Activated B cell treated with CpG ODN at 0.5 μM for 24 hours (primary cell): ENCODE measurements at regions of chr17 and their contacts with region 1.

Region 1: DNA sequence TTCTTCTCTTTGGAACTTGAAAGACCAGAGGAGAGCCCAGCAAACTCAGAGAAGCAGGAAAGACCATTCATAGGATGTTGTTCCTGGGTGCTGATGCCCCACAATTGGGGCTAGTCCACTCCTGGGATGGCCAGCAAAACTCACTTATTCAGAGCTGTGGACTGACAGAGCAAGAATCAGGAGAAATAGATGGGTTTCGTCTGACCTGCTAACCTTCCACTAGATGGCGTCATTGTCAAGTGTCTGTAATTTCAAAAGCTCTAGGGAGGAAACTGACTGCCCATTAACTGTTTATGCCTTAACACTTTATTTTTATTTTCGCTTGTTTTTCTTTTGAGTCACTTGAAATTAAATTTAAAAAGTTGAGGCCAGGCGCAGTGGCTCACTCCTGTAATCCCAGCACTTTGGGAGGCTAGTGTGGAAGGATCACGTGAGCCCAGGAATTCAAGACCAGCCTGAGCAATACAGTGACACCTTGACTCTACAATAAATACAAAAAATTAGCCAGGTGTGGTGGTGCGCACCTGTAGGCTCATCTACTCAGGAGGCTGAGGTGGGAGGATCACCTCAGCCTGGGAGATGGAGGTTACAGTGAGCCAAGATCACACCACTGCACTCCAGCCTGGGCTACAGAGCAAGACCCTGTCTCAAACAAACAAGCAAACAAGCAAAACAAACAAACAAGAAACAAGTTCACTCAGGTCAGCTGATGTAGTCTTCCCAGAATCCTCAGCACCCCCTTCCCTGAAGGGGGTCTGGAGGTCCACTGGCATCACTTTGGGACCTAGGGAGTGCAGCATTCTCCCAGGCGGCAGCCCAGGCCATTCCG is 28.6 kb upstream of the MILR1 start:
- DNase-seq: no peak
- ATAC-seq: peak; percentile 78
- H3K4me3 Mint-ChIP-seq: no peak overlapping the region
- H3K27ac Mint-ChIP-seq: no peak overlapping the region
- H3K4me1 Mint-ChIP-seq: peaks cover 4% of the 10 kb centered on the region
- H3K27me3 Mint-ChIP-seq: no peaks in the 10 kb centered on the region
- CTCF ChIP-seq: peak; percentile 30

Region 2: DNA sequence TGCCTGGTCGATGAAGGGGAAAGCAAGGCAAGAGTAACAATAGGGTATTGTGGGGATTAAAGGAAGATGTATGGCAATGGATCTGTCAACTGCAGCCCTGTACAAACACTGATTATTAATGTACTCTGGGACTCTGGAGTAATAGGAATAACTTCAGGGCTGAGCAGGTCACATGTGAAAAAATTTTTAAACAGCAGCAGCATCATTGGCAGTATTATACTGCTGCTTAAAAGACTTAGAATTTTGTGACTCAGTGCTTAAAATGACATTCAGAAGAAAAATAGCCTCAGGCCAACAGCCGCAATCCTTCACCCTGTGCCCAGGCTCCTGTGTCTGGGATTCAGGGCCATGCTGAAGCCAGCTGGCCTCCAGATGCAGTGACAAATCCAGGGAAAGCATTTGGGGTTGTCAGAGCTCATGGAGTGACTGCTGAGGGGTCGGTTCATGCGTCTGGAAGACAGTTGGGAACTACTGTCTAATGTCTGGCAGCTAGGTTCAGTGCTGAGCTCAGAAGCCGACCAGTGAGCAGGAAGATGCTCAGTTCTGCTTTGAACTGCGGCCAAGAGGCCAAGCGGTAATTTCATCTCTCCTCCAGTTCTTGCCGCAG is 179.5 kb before region 1 on chr17:
- CTCF ChIA-PET with region 1: no interaction called
- POLR2A ChIA-PET with region 1: no interaction called
- intact Hi-C with region 1: no loop called
- DNase-seq: no peak
- ATAC-seq: no peak
- H3K4me3 Mint-ChIP-seq: no peak overlapping the region
- H3K27ac Mint-ChIP-seq: no peak overlapping the region
- H3K4me1 Mint-ChIP-seq: peaks cover 9% of the 10 kb centered on the region
- H3K27me3 Mint-ChIP-seq: no peaks in the 10 kb centered on the region
- CTCF ChIP-seq: no peak

Region 3: GRCh38 chr17:64306850-64307463 is 113.4 kb before region 1 on chr17:
- CTCF ChIA-PET with region 1: interaction called, 68 read pairs
- POLR2A ChIA-PET with region 1: interaction called, 4 read pairs
- intact Hi-C with region 1: loop called (anchors 1 kb)
- DNase-seq: peak; percentile 50
- ATAC-seq: peak; percentile 58
- H3K4me3 Mint-ChIP-seq: no peak overlapping the region
- H3K27ac Mint-ChIP-seq: no peak overlapping the region
- H3K4me1 Mint-ChIP-seq: no peaks in the 10 kb centered on the region
- H3K27me3 Mint-ChIP-seq: no peaks in the 10 kb centered on the region
- CTCF ChIP-seq: peak; percentile 76

Region 4: GRCh38 chr17:64378890-64379354 is 41.4 kb before region 1 on chr17:
- CTCF ChIA-PET with region 1: interaction called, 11 read pairs
- POLR2A ChIA-PET with region 1: no interaction called
- intact Hi-C with region 1: no loop called
- DNase-seq: no peak
- ATAC-seq: no peak
- H3K4me3 Mint-ChIP-seq: no peak overlapping the region
- H3K27ac Mint-ChIP-seq: no peak overlapping the region
- H3K4me1 Mint-ChIP-seq: no peaks in the 10 kb centered on the region
- H3K27me3 Mint-ChIP-seq: no peaks in the 10 kb centered on the region
- CTCF ChIP-seq: no peak

Region 5: DNA sequence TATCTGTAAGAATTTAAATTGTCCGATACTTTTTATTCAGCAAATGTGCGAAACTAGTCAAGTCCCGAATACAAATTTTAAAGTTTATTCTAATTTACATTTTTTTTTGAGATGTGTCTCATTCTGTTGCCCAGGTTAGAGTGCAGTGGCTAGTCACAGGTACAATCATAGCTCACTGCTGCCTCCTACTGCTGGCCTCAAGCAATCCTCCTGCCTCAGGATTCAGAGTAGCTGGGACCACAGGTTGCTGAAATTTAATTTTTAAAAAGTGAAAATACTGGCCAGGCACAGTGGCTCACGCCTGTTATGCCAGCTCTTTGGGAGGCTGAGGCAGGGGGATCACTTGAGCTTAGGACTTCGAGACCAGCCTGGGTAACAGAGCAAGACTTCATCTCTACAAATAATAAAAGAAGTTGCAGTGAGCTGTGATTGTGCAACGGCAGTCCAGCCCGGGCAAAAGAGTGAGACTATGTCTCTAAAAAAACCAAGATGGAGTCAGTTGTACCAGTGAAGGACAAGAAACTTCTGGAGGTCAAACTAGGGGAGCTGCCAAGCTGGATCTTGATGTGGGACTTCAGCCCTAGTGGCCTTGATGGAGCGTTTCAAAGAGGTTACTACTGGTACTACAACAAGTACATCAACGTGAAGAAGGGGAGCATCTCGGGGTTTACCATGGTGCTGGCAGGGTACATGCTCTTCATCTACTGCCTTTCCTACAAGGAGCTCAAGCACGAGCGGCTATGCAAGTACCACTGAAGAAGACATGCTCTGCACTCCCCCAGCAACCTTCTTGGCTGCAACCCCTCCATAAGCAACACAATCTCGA is 70.9 kb after region 1 on chr17:
- CTCF ChIA-PET with region 1: interaction called, 174 read pairs
- POLR2A ChIA-PET with region 1: interaction called, 26 read pairs
- intact Hi-C with region 1: loop called (anchors 1 kb)
- DNase-seq: no peak
- ATAC-seq: peak; percentile 72
- H3K4me3 Mint-ChIP-seq: no peak overlapping the region
- H3K27ac Mint-ChIP-seq: no peak overlapping the region
- H3K4me1 Mint-ChIP-seq: peaks cover 28% of the 10 kb centered on the region
- H3K27me3 Mint-ChIP-seq: no peaks in the 10 kb centered on the region
- CTCF ChIP-seq: no peak

Region 6: GRCh38 chr17:64599187-64599676 is 178.9 kb after region 1 on chr17:
- CTCF ChIA-PET with region 1: interaction called, 8 read pairs
- POLR2A ChIA-PET with region 1: no interaction called
- intact Hi-C with region 1: loop called (anchors 2 kb)
- DNase-seq: peak; percentile 36
- ATAC-seq: peak; percentile 100
- H3K4me3 Mint-ChIP-seq: peak overlapping the region; percentile 47
- H3K27ac Mint-ChIP-seq: peak overlapping the region; percentile 71
- H3K4me1 Mint-ChIP-seq: peaks cover 32% of the 10 kb centered on the region
- H3K27me3 Mint-ChIP-seq: no peaks in the 10 kb centered on the region
- CTCF ChIP-seq: no peak

Region 7: DNA sequence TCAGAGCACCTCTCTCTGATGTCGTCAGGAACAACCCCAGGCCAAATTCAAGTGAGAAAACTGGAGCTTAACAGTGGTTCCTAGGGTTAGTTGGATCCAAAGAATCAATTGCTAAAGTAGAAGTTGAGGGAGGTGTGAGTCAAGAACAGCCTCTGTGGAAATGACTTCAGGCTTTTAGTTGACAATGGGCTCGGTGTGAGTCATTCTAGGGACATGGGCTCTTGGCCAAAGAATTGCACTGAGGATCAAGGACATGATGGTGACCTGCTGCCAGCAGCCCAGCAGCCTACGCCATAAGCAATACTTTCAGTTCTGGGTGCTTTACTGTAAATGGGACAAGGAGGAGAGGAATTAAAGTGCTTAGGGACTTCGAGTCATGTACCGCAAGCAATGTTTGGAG is 273.9 kb after region 1 on chr17:
- CTCF ChIA-PET with region 1: no interaction called
- POLR2A ChIA-PET with region 1: no interaction called
- intact Hi-C with region 1: no loop called
- DNase-seq: no peak
- ATAC-seq: no peak
- H3K4me3 Mint-ChIP-seq: no peak overlapping the region
- H3K27ac Mint-ChIP-seq: no peak overlapping the region
- H3K4me1 Mint-ChIP-seq: no peaks in the 10 kb centered on the region
- H3K27me3 Mint-ChIP-seq: no peaks in the 10 kb centered on the region
- CTCF ChIP-seq: no peak

Region 8: GRCh38 chr17:64736804-64737492 is 316.6 kb after region 1 on chr17:
- CTCF ChIA-PET with region 1: interaction called, 9 read pairs
- POLR2A ChIA-PET with region 1: no interaction called
- intact Hi-C with region 1: loop called (anchors 2 kb)
- DNase-seq: no peak
- ATAC-seq: peak; percentile 52
- H3K4me3 Mint-ChIP-seq: no peak overlapping the region
- H3K27ac Mint-ChIP-seq: no peak overlapping the region
- H3K4me1 Mint-ChIP-seq: peaks cover 7% of the 10 kb centered on the region
- H3K27me3 Mint-ChIP-seq: no peaks in the 10 kb centered on the region
- CTCF ChIP-seq: no peak

Region 9: DNA sequence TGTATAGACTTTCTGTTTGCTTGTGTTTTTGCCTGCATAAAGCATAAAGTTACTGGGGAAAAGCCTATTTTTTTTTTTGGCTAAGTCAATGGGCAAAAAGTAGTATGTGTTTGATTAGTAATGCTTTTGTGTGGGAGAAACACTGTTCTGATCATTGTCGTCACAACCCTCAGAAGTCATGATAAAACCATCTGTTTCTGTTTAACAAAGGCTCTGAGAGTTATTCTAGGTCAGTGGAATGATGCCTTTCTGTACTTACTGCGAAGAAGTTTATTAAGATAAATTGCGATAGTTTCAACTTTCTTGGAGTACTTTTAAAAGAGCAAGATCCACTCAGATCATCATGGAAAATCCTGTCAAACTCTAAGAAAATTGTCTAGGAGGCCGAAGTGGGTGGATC is 1963.0 kb after region 1 on chr17:
- CTCF ChIA-PET with region 1: no interaction called
- POLR2A ChIA-PET with region 1: no interaction called
- intact Hi-C with region 1: no loop called
- DNase-seq: no peak
- ATAC-seq: no peak
- H3K4me3 Mint-ChIP-seq: no peak overlapping the region
- H3K27ac Mint-ChIP-seq: no peak overlapping the region
- H3K4me1 Mint-ChIP-seq: no peaks in the 10 kb centered on the region
- H3K27me3 Mint-ChIP-seq: peaks cover 5% of the 10 kb centered on the region
- CTCF ChIP-seq: no peak